Left cardiac atrium (tissue), 4 donors: ENCODE measurements at regions of chr1 and their contacts with region 1.

Region 1: GRCh38 chr1:219812491-219813203 is 115.7 kb downstream of the SLC30A10 start:
- DNase-seq: no peak
- ATAC-seq: peak; percentile 67 to 88

Region 2: GRCh38 chr1:218339267-218339831 is 1473.3 kb before region 1 on chr1:
- intact Hi-C with region 1: loop called in 1 of 2 experiments (anchors 5 kb)
- DNase-seq: no peak
- ATAC-seq: no peak

Region 3: GRCh38 chr1:218837051-218837450 is 975.6 kb before region 1 on chr1:
- intact Hi-C with region 1: no loop called
- DNase-seq: no peak
- ATAC-seq: no peak

Region 4: DNA sequence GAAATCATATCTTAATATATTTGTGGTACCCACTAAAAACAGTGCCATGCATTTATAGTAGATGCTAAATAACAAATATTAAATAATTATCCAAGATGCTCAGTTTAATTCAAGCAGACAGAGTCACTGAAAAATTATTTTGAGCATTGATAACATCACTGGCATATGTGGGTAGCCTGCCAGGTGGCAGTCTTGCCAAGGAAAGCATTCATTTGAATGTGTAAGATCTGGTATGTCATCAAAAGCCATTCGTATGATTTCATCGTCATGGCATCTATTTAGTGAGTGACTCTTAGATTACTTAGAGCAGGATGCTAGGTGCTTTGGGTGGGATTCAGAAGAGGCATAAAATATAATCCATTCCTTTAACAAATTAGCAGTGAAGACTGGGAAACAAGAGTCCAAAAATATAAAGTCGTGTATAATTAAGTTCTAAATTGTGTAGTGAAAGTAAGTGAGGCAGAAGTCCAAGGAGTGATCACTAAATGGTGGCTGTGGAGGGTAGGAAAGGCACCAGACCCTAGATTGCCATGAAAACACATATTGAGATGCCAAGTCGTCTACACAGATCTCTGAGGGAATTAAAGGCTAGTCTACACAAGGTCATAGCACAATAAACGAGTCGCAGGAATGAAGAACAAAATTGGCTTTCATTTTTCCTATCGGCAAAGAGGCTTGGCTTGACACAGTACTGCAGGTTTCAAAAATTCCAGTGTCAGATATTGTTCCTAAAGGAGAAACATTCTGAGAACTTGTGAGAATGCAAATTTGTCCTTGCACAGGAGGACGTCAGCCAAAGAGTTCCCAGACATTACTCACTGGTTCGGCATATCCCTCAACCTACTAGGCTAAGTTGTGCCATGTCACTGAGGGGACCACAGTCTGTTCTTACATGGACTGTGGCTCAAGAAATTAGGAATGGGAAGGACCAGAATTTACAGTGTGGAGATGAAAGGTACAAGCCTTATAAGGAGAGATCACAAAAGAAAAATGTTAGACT is 508.1 kb before region 1 on chr1:
- intact Hi-C with region 1: loop called in 1 of 2 experiments (anchors 10 kb)
- DNase-seq: no peak
- ATAC-seq: peak; percentile 76 to 94

Region 5: DNA sequence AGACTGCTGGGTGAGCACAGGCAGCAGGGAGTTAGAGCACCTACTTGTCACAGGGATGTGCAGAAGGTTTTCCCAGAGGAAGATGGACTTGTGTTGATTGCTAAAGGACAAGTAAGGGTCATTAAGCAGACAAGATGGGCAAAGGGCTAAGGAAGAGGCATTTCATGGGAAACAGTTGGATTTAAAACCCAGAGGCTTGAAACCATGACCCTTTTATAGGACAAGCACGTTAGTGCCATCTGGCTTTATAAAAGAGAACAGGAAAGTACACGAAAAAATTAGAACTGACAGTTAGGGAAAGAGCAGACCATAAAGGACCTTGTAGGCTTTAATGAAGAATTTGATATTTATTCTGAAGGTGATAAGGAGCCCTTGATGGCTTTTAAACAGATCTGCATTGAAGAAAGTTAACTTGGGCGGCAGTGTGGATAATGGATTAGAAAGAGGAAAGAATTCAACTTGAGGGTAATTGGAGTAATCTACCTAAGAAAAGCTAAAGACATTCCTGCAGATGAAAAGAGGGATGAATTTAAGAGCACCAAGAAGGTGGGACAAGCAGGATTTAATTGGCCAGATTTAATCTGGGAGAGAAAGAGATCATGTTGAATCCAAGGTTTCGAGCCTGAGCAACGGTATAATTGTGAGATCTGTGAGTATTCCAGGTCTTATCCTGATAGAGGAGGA is 268.3 kb before region 1 on chr1:
- intact Hi-C with region 1: no loop called
- DNase-seq: no peak
- ATAC-seq: peak in 1 of 2 donors; percentile 50

Region 6: GRCh38 chr1:219660666-219661463 is 151.8 kb before region 1 on chr1:
- intact Hi-C with region 1: loop called in 1 of 2 experiments (anchors 5 kb)
- DNase-seq: peak; percentile 92
- ATAC-seq: peak; percentile 92 to 95

Region 7: GRCh38 chr1:219990782-219991510 is 178.3 kb after region 1 on chr1:
- intact Hi-C with region 1: no loop called
- DNase-seq: no peak
- ATAC-seq: no peak